Activated CD4-positive, alpha-beta T cell treated with anti-CD3 and anti-CD28 coated beads for 36 hours (primary cell): ENCODE measurements at regions of chr1 and their contacts with region 1.

Region 1: DNA sequence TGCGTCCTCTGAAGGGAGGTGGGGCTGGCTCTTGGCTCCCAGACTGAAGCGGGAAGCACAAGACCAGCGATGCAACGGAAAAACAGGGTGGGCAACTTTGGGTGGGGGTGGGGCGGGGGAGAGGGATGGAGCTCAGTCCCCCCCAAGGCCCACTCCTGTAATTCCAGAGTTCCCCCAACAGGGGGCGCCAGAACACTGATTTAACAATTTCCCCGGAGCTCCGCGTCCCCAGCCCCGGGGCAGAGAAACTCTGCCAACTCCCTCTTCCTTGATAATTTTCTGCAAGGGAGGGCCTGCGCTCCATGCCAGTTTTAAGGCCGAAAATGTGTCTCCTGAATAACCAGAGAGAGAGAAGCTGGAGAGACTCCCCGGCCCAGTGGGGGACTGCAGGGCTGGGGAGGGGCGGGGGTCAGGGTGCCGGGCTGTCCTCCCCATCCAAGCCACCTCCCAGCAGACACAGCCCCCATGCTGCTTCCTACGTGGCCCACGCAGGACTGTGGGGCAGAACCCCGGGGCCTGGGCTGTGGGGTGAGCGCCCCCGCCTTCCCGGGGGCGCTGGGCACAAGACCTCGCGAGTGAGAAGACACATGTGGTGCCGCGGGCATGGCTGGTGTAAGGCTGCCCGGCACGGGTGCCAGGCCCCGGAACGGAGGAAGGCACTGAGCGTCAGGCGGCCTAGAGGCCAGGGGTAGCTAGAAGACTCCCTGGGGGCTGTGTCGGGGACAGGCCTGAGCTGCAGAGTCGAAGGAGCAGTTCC is 51.4 kb downstream of the KIF21B start:
- DNase-seq: peak; percentile 78
- ATAC-seq: no peak
- H3K4me3 Mint-ChIP-seq: no peak overlapping the region
- H3K27ac Mint-ChIP-seq: no peak overlapping the region
- H3K4me1 Mint-ChIP-seq: no peaks in the 10 kb centered on the region
- H3K27me3 Mint-ChIP-seq: no peaks in the 10 kb centered on the region

Region 2: GRCh38 chr1:200992382-200993048 is 20.4 kb after region 1 on chr1:
- CTCF ChIA-PET with region 1: interaction called, 10 read pairs
- POLR2A ChIA-PET with region 1: no interaction called
- intact Hi-C with region 1: no loop called
- DNase-seq: no peak
- ATAC-seq: no peak
- H3K4me3 Mint-ChIP-seq: no peak overlapping the region
- H3K27ac Mint-ChIP-seq: no peak overlapping the region
- H3K4me1 Mint-ChIP-seq: no peaks in the 10 kb centered on the region
- H3K27me3 Mint-ChIP-seq: no peaks in the 10 kb centered on the region

Region 3: GRCh38 chr1:201016211-201016651 is 44.1 kb after region 1 on chr1:
- CTCF ChIA-PET with region 1: interaction called, 18 read pairs
- POLR2A ChIA-PET with region 1: no interaction called
- intact Hi-C with region 1: no loop called
- DNase-seq: no peak
- ATAC-seq: no peak
- H3K4me3 Mint-ChIP-seq: peak overlapping the region; percentile 51
- H3K27ac Mint-ChIP-seq: peak overlapping the region; percentile 99
- H3K4me1 Mint-ChIP-seq: peaks cover 94% of the 10 kb centered on the region
- H3K27me3 Mint-ChIP-seq: no peaks in the 10 kb centered on the region

Region 4: GRCh38 chr1:201042779-201043461 is 70.8 kb after region 1 on chr1:
- CTCF ChIA-PET with region 1: interaction called, 66 read pairs
- POLR2A ChIA-PET with region 1: interaction called, 3 read pairs
- intact Hi-C with region 1: loop called (anchors 1 kb)
- DNase-seq: peak; percentile 85
- ATAC-seq: peak; percentile 96
- H3K4me3 Mint-ChIP-seq: no peak overlapping the region
- H3K27ac Mint-ChIP-seq: no peak overlapping the region
- H3K4me1 Mint-ChIP-seq: no peaks in the 10 kb centered on the region
- H3K27me3 Mint-ChIP-seq: no peaks in the 10 kb centered on the region

Region 5: DNA sequence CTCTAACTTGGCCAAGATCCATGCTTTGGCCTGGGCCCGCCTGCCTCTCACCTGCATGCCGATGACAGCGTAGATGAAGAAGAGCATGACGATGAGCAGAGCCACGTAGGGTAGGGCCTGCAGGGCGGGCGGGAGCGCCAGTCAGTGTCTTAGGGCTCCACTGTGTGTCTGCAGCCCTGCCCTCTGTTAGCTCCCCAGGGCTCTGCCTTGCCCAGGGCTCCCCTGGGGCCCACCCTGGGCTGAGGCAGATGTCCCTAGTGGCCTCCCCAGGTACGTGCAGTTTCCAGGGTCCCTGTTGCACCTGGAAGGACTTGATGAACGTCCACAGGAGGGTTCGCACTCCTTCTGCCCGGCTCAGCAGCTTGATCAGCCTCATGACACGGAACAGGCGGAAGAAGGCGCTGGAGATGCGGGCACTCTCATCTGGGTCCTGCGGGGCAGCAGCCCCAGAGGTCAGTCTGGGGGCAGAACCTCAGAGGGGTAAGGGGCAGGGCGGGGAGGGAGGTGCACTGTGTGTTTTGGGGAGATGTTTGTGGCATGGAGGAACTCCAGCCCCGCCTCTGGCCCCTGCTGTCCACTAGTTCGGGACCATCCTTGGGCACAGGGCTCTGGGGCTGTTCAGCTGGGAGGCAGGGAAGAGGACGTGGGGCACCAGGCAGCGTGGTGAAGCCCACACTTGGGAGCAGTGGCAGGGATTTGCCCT is 81.2 kb after region 1 on chr1:
- CTCF ChIA-PET with region 1: interaction called, 16 read pairs
- POLR2A ChIA-PET with region 1: no interaction called
- intact Hi-C with region 1: no loop called
- DNase-seq: no peak
- ATAC-seq: no peak
- H3K4me3 Mint-ChIP-seq: no peak overlapping the region
- H3K27ac Mint-ChIP-seq: no peak overlapping the region
- H3K4me1 Mint-ChIP-seq: peaks cover 23% of the 10 kb centered on the region
- H3K27me3 Mint-ChIP-seq: no peaks in the 10 kb centered on the region

Region 6: GRCh38 chr1:201119206-201120197 is 147.4 kb after region 1 on chr1:
- CTCF ChIA-PET with region 1: interaction called, 43 read pairs
- POLR2A ChIA-PET with region 1: no interaction called
- intact Hi-C with region 1: loop called (anchors 1 kb)
- DNase-seq: peak; percentile 82
- ATAC-seq: peak; percentile 66
- H3K4me3 Mint-ChIP-seq: no peak overlapping the region
- H3K27ac Mint-ChIP-seq: no peak overlapping the region
- H3K4me1 Mint-ChIP-seq: peaks cover 4% of the 10 kb centered on the region
- H3K27me3 Mint-ChIP-seq: no peaks in the 10 kb centered on the region

Region 7: DNA sequence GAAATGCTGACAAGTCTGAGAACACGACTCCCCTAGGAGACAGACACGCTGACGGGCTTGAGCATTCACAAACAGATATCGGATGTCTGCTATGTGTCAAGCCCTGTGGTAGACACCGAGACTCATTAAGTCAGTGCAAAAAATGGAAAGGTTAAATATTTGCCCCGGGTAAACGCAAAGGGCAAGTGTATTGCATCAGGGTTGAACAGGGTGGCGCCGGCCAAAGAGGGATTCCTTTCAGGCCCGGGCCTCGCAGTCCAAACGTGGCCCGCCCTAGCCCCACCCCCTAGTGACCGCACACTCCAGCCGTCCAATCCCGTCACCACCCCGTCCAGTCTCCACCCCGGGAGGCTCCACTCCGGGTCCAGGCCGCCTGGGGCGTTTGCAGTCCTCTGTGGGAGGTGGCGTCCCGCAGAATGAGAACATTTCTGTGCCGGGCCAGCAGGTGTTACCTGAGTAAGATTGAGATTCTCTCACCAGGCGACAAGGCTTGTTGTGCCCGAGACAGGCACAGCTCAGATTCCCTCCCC is 198.5 kb after region 1 on chr1:
- CTCF ChIA-PET with region 1: no interaction called
- POLR2A ChIA-PET with region 1: no interaction called
- intact Hi-C with region 1: no loop called
- DNase-seq: peak; percentile 92
- ATAC-seq: peak; percentile 83
- H3K4me3 Mint-ChIP-seq: peak overlapping the region; percentile 71
- H3K27ac Mint-ChIP-seq: peak overlapping the region; percentile 90
- H3K4me1 Mint-ChIP-seq: peaks cover 21% of the 10 kb centered on the region
- H3K27me3 Mint-ChIP-seq: peaks cover 15% of the 10 kb centered on the region

Region 8: DNA sequence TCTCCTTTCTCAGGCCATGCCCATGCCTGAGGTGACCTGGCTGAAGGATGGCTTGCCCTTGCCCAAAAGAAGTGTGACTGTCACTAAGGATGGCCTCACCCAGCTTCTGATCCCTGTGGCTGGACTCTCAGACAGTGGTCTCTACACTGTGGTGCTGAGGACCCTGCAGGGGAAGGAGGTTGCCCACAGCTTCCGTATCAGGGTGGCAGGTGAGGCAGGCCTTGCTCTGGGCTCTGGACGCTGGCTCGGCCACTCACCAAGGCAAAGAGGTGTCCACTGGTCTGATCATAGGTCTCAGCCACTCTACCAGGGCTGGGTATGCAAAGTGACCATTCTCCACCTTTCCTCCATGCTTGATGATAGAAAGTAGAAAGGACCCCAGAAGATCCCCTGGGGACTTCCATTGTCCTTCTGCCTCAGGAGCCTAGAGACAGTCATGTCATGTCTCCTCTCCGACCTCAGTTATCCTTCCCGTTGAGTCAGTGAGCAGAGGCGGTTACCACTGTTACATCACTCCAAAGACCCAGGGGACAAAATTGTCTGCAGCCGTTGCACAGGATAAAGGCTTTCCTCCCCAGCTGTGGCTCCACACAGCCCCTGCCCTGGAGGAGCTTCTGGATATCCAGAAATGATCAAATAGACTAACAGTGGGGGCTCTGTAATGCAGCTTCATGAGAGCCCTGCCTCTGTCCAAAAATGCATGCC is 252.7 kb after region 1 on chr1:
- CTCF ChIA-PET with region 1: interaction called, 4 read pairs
- POLR2A ChIA-PET with region 1: no interaction called
- intact Hi-C with region 1: loop called in 1 of 2 experiments (anchors 5 kb)
- DNase-seq: no peak
- ATAC-seq: no peak
- H3K4me3 Mint-ChIP-seq: no peak overlapping the region
- H3K27ac Mint-ChIP-seq: no peak overlapping the region
- H3K4me1 Mint-ChIP-seq: no peaks in the 10 kb centered on the region
- H3K27me3 Mint-ChIP-seq: no peaks in the 10 kb centered on the region